PC-3 (cell line): ENCODE measurements at regions of chr14 and their contacts with region 1.

Region 1: DNA sequence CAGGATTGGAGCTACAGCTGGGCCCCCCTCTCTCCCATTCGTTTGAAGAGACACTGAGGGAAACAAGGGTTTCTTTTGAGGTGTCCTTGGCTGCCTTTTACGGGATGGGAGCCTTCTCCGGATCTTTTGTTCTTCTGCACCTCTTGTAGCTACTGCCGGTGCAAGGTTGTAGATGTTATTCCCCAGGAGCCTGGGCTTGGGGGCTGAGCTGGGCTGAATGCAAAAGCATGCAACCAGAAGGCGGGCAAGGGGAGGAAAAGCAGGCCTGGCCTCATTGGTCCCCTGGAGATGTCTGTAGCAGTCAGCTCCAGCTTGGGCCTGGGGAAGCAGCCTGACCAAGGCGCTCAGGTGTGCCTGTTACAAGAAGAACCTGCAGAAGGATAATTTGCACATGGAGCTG is 110.3 kb downstream of the GCH1 start:
- DNase-seq: no peak
- ATAC-seq: no peak
- H3K4me3 ChIP-seq: no peak overlapping the region
- H3K27ac ChIP-seq: no peak overlapping the region
- H3K4me1 ChIP-seq: peaks cover 9% of the 10 kb centered on the region
- H3K27me3 ChIP-seq: no peaks in the 10 kb centered on the region
- CTCF ChIP-seq: no peak

Region 2: GRCh38 chr14:54364555-54365415 is 427.5 kb before region 1 on chr14:
- CTCF ChIA-PET with region 1: no interaction called
- POLR2A ChIA-PET with region 1: no interaction called
- intact Hi-C with region 1: no loop called
- DNase-seq: peak; percentile 96
- ATAC-seq: peak; percentile 78
- H3K4me3 ChIP-seq: peak overlapping the region; percentile 55
- H3K27ac ChIP-seq: peak overlapping the region; percentile 91
- H3K4me1 ChIP-seq: peaks cover 60% of the 10 kb centered on the region
- H3K27me3 ChIP-seq: no peaks in the 10 kb centered on the region
- CTCF ChIP-seq: no peak

Region 3: DNA sequence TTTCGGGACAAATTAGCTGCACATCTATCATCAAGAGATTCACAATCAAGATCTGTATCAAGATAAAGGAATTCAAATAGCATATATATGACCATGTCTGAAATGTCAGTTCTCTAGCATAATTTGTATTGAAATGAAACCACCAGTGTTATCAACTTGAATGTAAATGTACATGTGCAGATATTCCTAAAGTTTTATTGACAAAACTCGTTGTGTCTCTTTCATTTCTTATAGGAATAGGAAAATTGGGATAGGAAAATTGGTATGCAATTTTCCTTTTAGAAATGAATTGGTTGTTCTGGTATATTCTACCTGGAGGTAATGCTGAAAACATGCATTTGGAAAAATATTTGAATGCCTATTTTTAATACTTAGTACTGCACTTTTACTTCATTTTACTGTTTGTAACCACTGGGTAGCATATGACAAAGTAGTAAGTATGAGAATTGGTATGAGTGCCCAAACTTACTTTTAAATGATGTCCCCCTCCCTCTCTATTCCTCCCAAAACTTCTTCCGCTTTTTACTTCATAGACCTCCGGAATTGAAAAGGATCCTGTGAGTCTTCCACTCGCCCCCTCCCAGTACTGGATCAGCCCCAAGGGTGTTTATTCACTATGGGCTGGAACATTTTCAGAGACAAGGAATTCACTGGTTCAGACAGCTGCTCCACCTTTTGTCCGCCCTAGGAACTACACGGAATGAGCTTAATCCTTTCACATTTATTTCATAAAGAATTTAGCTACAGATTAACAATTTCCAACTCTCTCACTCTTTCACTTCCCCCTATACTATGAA is 372.1 kb before region 1 on chr14:
- CTCF ChIA-PET with region 1: no interaction called
- POLR2A ChIA-PET with region 1: interaction called, 10 read pairs
- intact Hi-C with region 1: no loop called
- DNase-seq: peak; percentile 89
- ATAC-seq: peak; percentile 82
- H3K4me3 ChIP-seq: no peak overlapping the region
- H3K27ac ChIP-seq: no peak overlapping the region
- H3K4me1 ChIP-seq: no peaks in the 10 kb centered on the region
- H3K27me3 ChIP-seq: no peaks in the 10 kb centered on the region
- CTCF ChIP-seq: peak; percentile 96

Region 4: GRCh38 chr14:54435500-54435981 is 356.7 kb before region 1 on chr14:
- CTCF ChIA-PET with region 1: no interaction called
- POLR2A ChIA-PET with region 1: no interaction called
- intact Hi-C with region 1: no loop called
- DNase-seq: peak; percentile 96
- ATAC-seq: peak; percentile 79
- H3K4me3 ChIP-seq: peak overlapping the region; percentile 41
- H3K27ac ChIP-seq: peak overlapping the region; percentile 79
- H3K4me1 ChIP-seq: peaks cover 60% of the 10 kb centered on the region
- H3K27me3 ChIP-seq: no peaks in the 10 kb centered on the region
- CTCF ChIP-seq: no peak

Region 5: GRCh38 chr14:54549862-54550261 is 242.4 kb before region 1 on chr14:
- CTCF ChIA-PET with region 1: no interaction called
- POLR2A ChIA-PET with region 1: no interaction called
- intact Hi-C with region 1: loop called (anchors 5 kb)
- DNase-seq: peak; percentile 45
- ATAC-seq: no peak; the same call in 1 of the 2 replicates
- H3K4me3 ChIP-seq: no peak overlapping the region
- H3K27ac ChIP-seq: no peak overlapping the region
- H3K4me1 ChIP-seq: no peaks in the 10 kb centered on the region
- H3K27me3 ChIP-seq: no peaks in the 10 kb centered on the region
- CTCF ChIP-seq: no peak